IMR-90 (cell line): ENCODE measurements at regions of chr4 and their contacts with region 1.

Region 1: GRCh38 chr4:88858752-88859151 is 161.1 kb upstream of the NAP1L5 start:
- DNase-seq: no peak
- ATAC-seq: no peak
- H3K4me3 ChIP-seq: no peak overlapping the region
- H3K27ac ChIP-seq: no peak overlapping the region
- H3K4me1 ChIP-seq: peaks cover 15% of the 10 kb centered on the region
- H3K27me3 ChIP-seq: no peaks in the 10 kb centered on the region
- CTCF ChIP-seq: no peak
- POLR2A ChIP-seq: no peak
- RAD21 ChIP-seq: no peak

Region 2: DNA sequence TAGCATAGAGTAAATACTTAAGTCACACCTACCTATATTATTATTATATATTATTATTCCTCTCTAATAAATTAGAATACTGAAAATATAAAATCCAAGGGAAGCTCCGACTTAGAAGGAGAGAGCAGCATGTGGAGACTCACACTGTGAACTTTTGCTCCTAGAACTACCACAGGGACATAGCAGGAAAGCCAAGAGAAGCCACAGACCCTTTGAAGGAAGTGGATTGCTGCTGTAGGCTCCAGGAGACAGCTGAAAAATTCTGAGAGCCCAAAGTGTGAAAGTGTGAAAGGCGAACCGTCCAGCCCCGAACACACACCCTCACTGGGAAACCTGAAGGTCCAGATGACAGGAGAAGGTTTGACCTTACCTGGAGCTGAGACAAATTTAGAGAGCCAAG is 21.2 kb after region 1 on chr4:
- CTCF ChIA-PET with region 1: no interaction called
- POLR2A ChIA-PET with region 1: no interaction called
- dilution Hi-C with region 1: no loop called
- in situ Hi-C with region 1: no loop called
- intact Hi-C with region 1: loop called (anchors 1 kb)
- DNase-seq: no peak
- ATAC-seq: no peak
- H3K4me3 ChIP-seq: no peak overlapping the region
- H3K27ac ChIP-seq: no peak overlapping the region
- H3K4me1 ChIP-seq: no peaks in the 10 kb centered on the region
- H3K27me3 ChIP-seq: no peaks in the 10 kb centered on the region
- CTCF ChIP-seq: no peak
- POLR2A ChIP-seq: no peak
- RAD21 ChIP-seq: no peak

Region 3: DNA sequence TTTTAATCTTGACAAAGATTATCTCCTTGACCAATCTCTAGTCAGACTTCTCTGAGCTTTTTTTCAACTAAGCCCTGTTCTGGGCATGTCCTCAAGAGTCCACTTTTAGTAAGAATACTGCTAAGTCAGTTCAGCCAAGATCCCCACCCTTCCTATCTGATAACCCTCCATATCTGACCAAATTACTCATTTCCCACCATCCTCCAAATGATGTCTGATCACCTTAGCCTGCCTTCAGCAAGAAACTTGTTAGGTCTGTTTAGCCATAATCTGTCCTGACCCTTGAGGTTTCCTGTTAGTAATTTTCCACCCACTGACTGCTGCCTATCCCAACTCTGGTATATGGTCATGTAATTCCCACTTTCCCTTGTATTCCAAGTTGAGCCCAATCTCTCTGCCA is 133.0 kb after region 1 on chr4:
- CTCF ChIA-PET with region 1: no interaction called
- POLR2A ChIA-PET with region 1: no interaction called
- dilution Hi-C with region 1: no loop called
- in situ Hi-C with region 1: no loop called
- intact Hi-C with region 1: loop called (anchors 5 kb)
- DNase-seq: peak; percentile 54
- ATAC-seq: no peak
- H3K4me3 ChIP-seq: no peak overlapping the region
- H3K27ac ChIP-seq: no peak overlapping the region
- H3K4me1 ChIP-seq: no peaks in the 10 kb centered on the region
- H3K27me3 ChIP-seq: no peaks in the 10 kb centered on the region
- CTCF ChIP-seq: no peak
- POLR2A ChIP-seq: no peak
- RAD21 ChIP-seq: no peak